ENCODE measurements at regions of chr10 and their contacts with region 1.

Region 1: GRCh38 chr10:104406715-104407650 is 53.4 kb downstream of the CFAP58 start:
- DNase-seq: peak; percentile 18
- ATAC-seq: peak; percentile 91
- H3K4me3 ChIP-seq: no peak overlapping the region
- H3K27ac ChIP-seq: no peak overlapping the region
- H3K4me1 ChIP-seq: no peaks in the 10 kb centered on the region; the same call in 1 of the 2 replicates
- H3K27me3 ChIP-seq: peaks cover 16% of the 10 kb centered on the region
- CTCF ChIP-seq: peak; percentile 81

Region 2: DNA sequence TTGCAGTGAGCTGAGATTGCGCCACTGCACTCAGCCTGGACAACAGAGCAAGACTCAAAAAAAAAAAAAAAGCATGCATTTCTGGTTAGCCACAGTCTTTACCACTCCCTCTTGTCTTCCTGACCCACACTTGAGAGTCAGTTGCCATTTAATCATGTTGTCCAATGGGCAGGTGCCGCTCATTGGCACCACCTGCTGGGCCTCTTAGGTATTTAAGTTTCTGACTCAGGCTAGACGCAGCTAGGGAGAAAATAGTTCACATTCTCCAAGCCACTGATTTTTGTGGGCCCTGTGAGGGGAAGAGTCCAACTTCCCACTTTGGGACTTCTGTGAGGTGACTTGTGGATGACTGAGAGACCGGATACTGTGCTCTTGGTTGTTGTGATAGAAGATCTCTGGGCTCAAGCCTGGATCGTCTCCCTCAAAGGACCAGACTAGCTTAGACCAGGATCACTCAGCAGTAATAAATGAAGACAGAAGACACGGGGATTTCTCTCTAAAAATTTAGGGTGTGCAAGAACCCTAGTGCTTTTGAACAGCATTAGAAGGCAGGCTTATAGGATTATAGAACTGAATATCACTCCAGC is 207.4 kb after region 1 on chr10:
- CTCF ChIA-PET with region 1: interaction called, 3 read pairs
- POLR2A ChIA-PET with region 1: no interaction called
- in situ Hi-C with region 1: no loop called
- intact Hi-C with region 1: loop called (anchors 2 kb)
- DNase-seq: no peak
- ATAC-seq: peak; percentile 90
- H3K4me3 ChIP-seq: no peak overlapping the region
- H3K27ac ChIP-seq: no peak overlapping the region
- H3K4me1 ChIP-seq: no peaks in the 10 kb centered on the region
- H3K27me3 ChIP-seq: no peaks in the 10 kb centered on the region
- CTCF ChIP-seq: peak; percentile 86

Region 3: GRCh38 chr10:104816501-104816900 is 409.5 kb after region 1 on chr10:
- CTCF ChIA-PET with region 1: no interaction called
- POLR2A ChIA-PET with region 1: no interaction called
- in situ Hi-C with region 1: no loop called
- intact Hi-C with region 1: no loop called
- DNase-seq: no peak
- ATAC-seq: no peak
- H3K4me3 ChIP-seq: no peak overlapping the region
- H3K27ac ChIP-seq: no peak overlapping the region
- H3K4me1 ChIP-seq: no peaks in the 10 kb centered on the region
- H3K27me3 ChIP-seq: no peaks in the 10 kb centered on the region
- CTCF ChIP-seq: no peak

Region 4: GRCh38 chr10:104925232-104925851 is 518.4 kb after region 1 on chr10:
- CTCF ChIA-PET with region 1: no interaction called
- POLR2A ChIA-PET with region 1: no interaction called
- in situ Hi-C with region 1: no loop called
- intact Hi-C with region 1: loop called (anchors 2 kb)
- DNase-seq: peak; percentile 43
- ATAC-seq: peak; percentile 85
- H3K4me3 ChIP-seq: no peak overlapping the region
- H3K27ac ChIP-seq: no peak overlapping the region
- H3K4me1 ChIP-seq: no peaks in the 10 kb centered on the region
- H3K27me3 ChIP-seq: no peaks in the 10 kb centered on the region; the same call in 1 of the 2 replicates
- CTCF ChIP-seq: peak; percentile 85

Region 5: GRCh38 chr10:105545101-105545500 is 1138.1 kb after region 1 on chr10:
- CTCF ChIA-PET with region 1: no interaction called
- POLR2A ChIA-PET with region 1: no interaction called
- in situ Hi-C with region 1: no loop called
- intact Hi-C with region 1: no loop called
- DNase-seq: no peak
- ATAC-seq: no peak
- H3K4me3 ChIP-seq: no peak overlapping the region
- H3K27ac ChIP-seq: no peak overlapping the region
- H3K4me1 ChIP-seq: no peaks in the 10 kb centered on the region
- H3K27me3 ChIP-seq: no peaks in the 10 kb centered on the region
- CTCF ChIP-seq: no peak

Measured in Panc1 (cell line).